IMR-90 (cell line): ENCODE measurements at regions of chr2 and their contacts with region 1.

Region 1: DNA sequence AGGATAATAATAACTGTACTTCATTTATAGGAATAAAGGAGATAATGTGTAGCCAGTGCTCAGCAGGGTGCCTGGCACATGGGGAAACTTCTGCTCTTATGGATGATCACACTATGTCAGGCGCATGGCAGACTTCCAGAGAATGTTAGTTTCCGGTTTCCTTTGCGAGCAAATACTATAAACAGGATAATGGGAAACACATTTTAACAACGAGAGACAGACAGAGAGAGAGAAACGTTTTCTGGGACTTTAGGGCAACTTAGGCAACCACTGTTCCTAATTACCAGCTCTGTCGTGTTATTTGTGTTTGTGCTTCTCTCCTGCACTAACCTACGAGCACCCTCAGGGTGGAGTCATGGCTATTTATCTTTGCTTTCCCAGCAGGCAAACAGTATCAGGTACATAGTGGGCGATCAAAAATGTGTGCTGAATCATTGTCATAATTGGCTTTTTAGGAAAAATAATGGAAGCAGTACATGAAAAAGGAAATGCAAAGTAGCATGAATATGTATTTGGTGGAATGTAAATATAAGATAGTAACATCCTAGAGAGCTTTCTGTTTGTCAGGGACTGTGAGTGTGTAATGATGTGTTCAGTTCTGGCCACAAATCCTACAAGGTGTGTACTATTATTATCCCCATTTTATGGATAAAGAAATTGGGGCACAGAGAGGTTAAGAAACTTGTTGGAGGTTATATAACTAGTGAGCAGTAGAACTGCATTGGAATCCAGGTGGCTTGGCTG is 36.8 kb upstream of the IGFBP2 start:
- DNase-seq: peak; percentile 87
- ATAC-seq: peak; percentile 66
- H3K4me3 ChIP-seq: peak overlapping the region; percentile 0; the same call in 1 of the 2 replicates
- H3K27ac ChIP-seq: peak overlapping the region; percentile 5; the same call in 1 of the 2 replicates
- H3K4me1 ChIP-seq: peaks cover 5% of the 10 kb centered on the region
- H3K27me3 ChIP-seq: peaks cover 2% of the 10 kb centered on the region; the same call in 1 of the 2 replicates
- CTCF ChIP-seq: no peak
- POLR2A ChIP-seq: no peak
- RAD21 ChIP-seq: no peak

Region 2: GRCh38 chr2:217729421-217730053 is 1133.1 kb after region 1 on chr2:
- CTCF ChIA-PET with region 1: no interaction called
- POLR2A ChIA-PET with region 1: interaction called, 10 read pairs
- dilution Hi-C with region 1: no loop called
- in situ Hi-C with region 1: no loop called
- intact Hi-C with region 1: no loop called
- DNase-seq: peak; percentile 13
- ATAC-seq: peak; percentile 46
- H3K4me3 ChIP-seq: no peak overlapping the region
- H3K27ac ChIP-seq: no peak overlapping the region; the same call in 1 of the 2 replicates
- H3K4me1 ChIP-seq: peaks cover 16% of the 10 kb centered on the region
- H3K27me3 ChIP-seq: no peaks in the 10 kb centered on the region
- CTCF ChIP-seq: no peak
- POLR2A ChIP-seq: no peak
- RAD21 ChIP-seq: no peak